Activated CD4-positive, alpha-beta memory T cell treated with anti-CD3 and anti-CD28 coated beads for 36 hours (primary cell): ENCODE measurements at regions of chr7 and their contacts with region 1.

Region 1: GRCh38 chr7:130961128-130961601 is 227.2 kb upstream of the KLF14 start:
- DNase-seq: peak; percentile 93
- H3K4me3 Mint-ChIP-seq: peak overlapping the region; percentile 84
- H3K27ac Mint-ChIP-seq: no peak overlapping the region
- H3K4me1 Mint-ChIP-seq: peaks cover 43% of the 10 kb centered on the region
- H3K27me3 Mint-ChIP-seq: peaks cover 6% of the 10 kb centered on the region

Region 2: GRCh38 chr7:130421684-130422083 is 539.5 kb before region 1 on chr7:
- CTCF ChIA-PET with region 1: no interaction called
- POLR2A ChIA-PET with region 1: no interaction called
- intact Hi-C with region 1: no loop called
- DNase-seq: peak; percentile 28
- H3K4me3 Mint-ChIP-seq: no peak overlapping the region
- H3K27ac Mint-ChIP-seq: no peak overlapping the region
- H3K4me1 Mint-ChIP-seq: peaks cover 34% of the 10 kb centered on the region
- H3K27me3 Mint-ChIP-seq: no peaks in the 10 kb centered on the region

Region 3: GRCh38 chr7:130941322-130942210 is 19.6 kb before region 1 on chr7:
- CTCF ChIA-PET with region 1: interaction called, 3 read pairs
- POLR2A ChIA-PET with region 1: interaction called, 299 read pairs
- intact Hi-C with region 1: loop called (anchors 2 kb)
- DNase-seq: peak; percentile 63
- H3K4me3 Mint-ChIP-seq: peak overlapping the region; percentile 66
- H3K27ac Mint-ChIP-seq: peak overlapping the region; percentile 87
- H3K4me1 Mint-ChIP-seq: peaks cover 89% of the 10 kb centered on the region
- H3K27me3 Mint-ChIP-seq: no peaks in the 10 kb centered on the region

Region 4: GRCh38 chr7:130988443-130988842 is 27.3 kb after region 1 on chr7:
- CTCF ChIA-PET with region 1: interaction called, 3 read pairs
- POLR2A ChIA-PET with region 1: interaction called, 115 read pairs
- intact Hi-C with region 1: no loop called
- DNase-seq: peak; percentile 66
- H3K4me3 Mint-ChIP-seq: peak overlapping the region; percentile 52
- H3K27ac Mint-ChIP-seq: peak overlapping the region; percentile 92
- H3K4me1 Mint-ChIP-seq: peaks cover 88% of the 10 kb centered on the region
- H3K27me3 Mint-ChIP-seq: no peaks in the 10 kb centered on the region

Region 5: GRCh38 chr7:131021460-131021859 is 60.3 kb after region 1 on chr7:
- CTCF ChIA-PET with region 1: no interaction called
- POLR2A ChIA-PET with region 1: interaction called, 49 read pairs
- intact Hi-C with region 1: no loop called
- DNase-seq: peak; percentile 37
- H3K4me3 Mint-ChIP-seq: peak overlapping the region; percentile 64
- H3K27ac Mint-ChIP-seq: peak overlapping the region; percentile 88
- H3K4me1 Mint-ChIP-seq: peaks cover 80% of the 10 kb centered on the region
- H3K27me3 Mint-ChIP-seq: no peaks in the 10 kb centered on the region

Region 6: GRCh38 chr7:131107337-131108211 is 146.4 kb after region 1 on chr7:
- CTCF ChIA-PET with region 1: no interaction called
- POLR2A ChIA-PET with region 1: interaction called, 19 read pairs
- intact Hi-C with region 1: loop called (anchors 2 kb)
- DNase-seq: peak; percentile 83
- H3K4me3 Mint-ChIP-seq: peak overlapping the region; percentile 94
- H3K27ac Mint-ChIP-seq: peak overlapping the region; percentile 97
- H3K4me1 Mint-ChIP-seq: peaks cover 53% of the 10 kb centered on the region
- H3K27me3 Mint-ChIP-seq: no peaks in the 10 kb centered on the region